Activated B cell treated with CpG ODN at 0.5 μM for 24 hours (primary cell): ENCODE measurements at regions of chr9 and their contacts with region 1.

Region 1: DNA sequence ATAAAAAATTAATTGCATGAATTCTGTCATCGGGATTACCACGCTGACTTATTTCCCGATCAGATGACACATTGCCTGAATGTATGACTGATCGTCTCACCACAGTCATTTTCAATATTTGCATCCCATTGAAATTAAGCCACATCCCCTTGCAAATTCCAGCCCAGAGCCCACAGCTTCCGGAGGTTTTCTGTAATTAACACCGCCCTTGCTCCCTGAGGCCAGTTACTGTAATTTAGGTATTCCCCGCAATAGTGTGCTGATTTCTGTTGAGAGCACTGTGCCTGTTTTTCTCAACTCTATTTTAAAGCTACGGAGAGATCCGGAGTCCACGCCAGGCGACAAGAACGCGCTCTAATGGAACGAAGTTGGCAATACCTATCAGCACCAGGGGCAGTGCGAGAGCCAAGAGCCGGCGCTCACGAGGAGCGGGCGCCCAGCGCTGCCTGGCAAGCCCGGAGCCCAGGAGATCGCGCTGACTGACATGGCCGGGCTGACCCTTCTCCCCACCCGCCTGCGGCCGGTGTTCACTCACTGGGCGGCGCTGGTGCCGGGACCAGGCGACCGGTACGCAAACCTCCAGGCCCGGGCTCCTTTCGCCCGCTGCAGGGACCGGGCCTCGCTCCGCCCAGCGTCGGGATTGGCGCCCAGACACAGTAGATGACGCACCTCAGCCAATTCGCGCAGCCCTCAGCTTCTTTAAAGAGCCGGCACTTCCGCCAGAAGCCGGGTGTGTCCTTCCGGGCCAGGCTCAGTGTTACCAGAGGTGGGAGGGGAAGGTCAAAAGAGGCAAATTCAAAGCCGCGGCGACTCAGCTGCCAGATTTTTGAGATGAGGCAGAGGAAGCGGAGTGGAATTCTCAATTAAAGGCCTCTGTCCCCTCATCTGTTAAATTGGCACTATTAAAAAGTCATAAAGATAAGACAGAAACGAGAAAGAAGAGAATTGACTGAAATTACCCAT is at the start of gene PLGRKT:
- DNase-seq: peak; percentile 82
- ATAC-seq: peak; percentile 78
- H3K4me3 Mint-ChIP-seq: peak within 1 kb of the TSS; percentile 96
- H3K27ac Mint-ChIP-seq: peak within 1 kb of the TSS; percentile 100
- H3K4me1 Mint-ChIP-seq: peaks cover 59% of the 10 kb centered on the region
- H3K27me3 Mint-ChIP-seq: no peaks in the 10 kb centered on the region
- CTCF ChIP-seq: no peak
- total RNA-seq, gene PLGRKT: 57.1 and 59.7 TPM in 2 replicates

Region 2: GRCh38 chr9:4679268-4680172 is 758.0 kb before region 1 on chr9 and contains the start of gene CDC37L1:
- CTCF ChIA-PET with region 1: no interaction called
- POLR2A ChIA-PET with region 1: interaction called, 4 read pairs
- intact Hi-C with region 1: loop called (anchors 1 kb)
- DNase-seq: peak; percentile 100
- ATAC-seq: peak; percentile 95
- H3K4me3 Mint-ChIP-seq: no peak within 1 kb of the TSS
- H3K27ac Mint-ChIP-seq: no peak within 1 kb of the TSS
- H3K4me1 Mint-ChIP-seq: peaks cover 7% of the 10 kb centered on the region
- H3K27me3 Mint-ChIP-seq: no peaks in the 10 kb centered on the region
- CTCF ChIP-seq: no peak
- total RNA-seq, gene CDC37L1: 12.3 and 14.7 TPM in 2 replicates

Region 3: DNA sequence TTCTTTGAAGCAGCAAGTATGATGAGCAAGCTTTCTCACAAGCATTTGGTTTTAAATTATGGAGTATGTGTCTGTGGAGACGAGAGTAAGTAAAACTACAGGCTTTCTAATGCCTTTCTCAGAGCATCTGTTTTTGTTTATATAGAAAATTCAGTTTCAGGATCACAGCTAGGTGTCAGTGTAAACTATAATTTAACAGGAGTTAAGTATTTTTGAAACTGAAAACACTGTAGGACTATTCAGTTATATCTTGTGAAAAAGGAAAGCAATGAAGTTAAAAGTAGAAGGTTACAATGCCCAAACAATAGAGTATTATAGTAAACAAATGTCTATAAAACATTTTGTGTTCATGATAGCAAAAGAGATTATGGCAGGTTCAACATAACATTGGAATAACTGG is 363.8 kb before region 1 on chr9:
- CTCF ChIA-PET with region 1: no interaction called
- POLR2A ChIA-PET with region 1: no interaction called
- intact Hi-C with region 1: loop called (anchors 10 kb)
- DNase-seq: no peak
- ATAC-seq: no peak
- H3K4me3 Mint-ChIP-seq: no peak overlapping the region
- H3K27ac Mint-ChIP-seq: no peak overlapping the region
- H3K4me1 Mint-ChIP-seq: no peaks in the 10 kb centered on the region
- H3K27me3 Mint-ChIP-seq: no peaks in the 10 kb centered on the region
- CTCF ChIP-seq: no peak

Region 4: GRCh38 chr9:5450359-5451091 is 13.0 kb after region 1 on chr9 and contains the start of gene CD274:
- CTCF ChIA-PET with region 1: interaction called, 22 read pairs
- POLR2A ChIA-PET with region 1: interaction called, 152 read pairs
- intact Hi-C with region 1: loop called (anchors 1 kb)
- DNase-seq: peak; percentile 76
- ATAC-seq: peak; percentile 83
- H3K4me3 Mint-ChIP-seq: peak within 1 kb of the TSS; percentile 95
- H3K27ac Mint-ChIP-seq: peak within 1 kb of the TSS; percentile 96
- H3K4me1 Mint-ChIP-seq: peaks cover 75% of the 10 kb centered on the region
- H3K27me3 Mint-ChIP-seq: no peaks in the 10 kb centered on the region
- CTCF ChIP-seq: no peak
- total RNA-seq, gene CD274: 47.4 and 48.9 TPM in 2 replicates

Region 5: GRCh38 chr9:5557606-5558587 is 120.4 kb after region 1 on chr9:
- CTCF ChIA-PET with region 1: no interaction called
- POLR2A ChIA-PET with region 1: interaction called, 22 read pairs
- intact Hi-C with region 1: no loop called
- DNase-seq: peak; percentile 20
- ATAC-seq: peak; percentile 83
- H3K4me3 Mint-ChIP-seq: peak overlapping the region; percentile 50
- H3K27ac Mint-ChIP-seq: peak overlapping the region; percentile 75
- H3K4me1 Mint-ChIP-seq: peaks cover 55% of the 10 kb centered on the region
- H3K27me3 Mint-ChIP-seq: no peaks in the 10 kb centered on the region
- CTCF ChIP-seq: no peak

Region 6: GRCh38 chr9:5832543-5833529 is 395.3 kb after region 1 on chr9 and contains the start of gene ERMP1:
- CTCF ChIA-PET with region 1: no interaction called
- POLR2A ChIA-PET with region 1: interaction called, 8 read pairs
- intact Hi-C with region 1: loop called (anchors 5 kb)
- DNase-seq: peak; percentile 88
- ATAC-seq: peak; percentile 88
- H3K4me3 Mint-ChIP-seq: peak within 1 kb of the TSS; percentile 90
- H3K27ac Mint-ChIP-seq: peak within 1 kb of the TSS; percentile 83
- H3K4me1 Mint-ChIP-seq: peaks cover 33% of the 10 kb centered on the region
- H3K27me3 Mint-ChIP-seq: no peaks in the 10 kb centered on the region
- CTCF ChIP-seq: peak; percentile 22
- total RNA-seq, gene ERMP1: 7.3 and 7.5 TPM in 2 replicates

Region 7: DNA sequence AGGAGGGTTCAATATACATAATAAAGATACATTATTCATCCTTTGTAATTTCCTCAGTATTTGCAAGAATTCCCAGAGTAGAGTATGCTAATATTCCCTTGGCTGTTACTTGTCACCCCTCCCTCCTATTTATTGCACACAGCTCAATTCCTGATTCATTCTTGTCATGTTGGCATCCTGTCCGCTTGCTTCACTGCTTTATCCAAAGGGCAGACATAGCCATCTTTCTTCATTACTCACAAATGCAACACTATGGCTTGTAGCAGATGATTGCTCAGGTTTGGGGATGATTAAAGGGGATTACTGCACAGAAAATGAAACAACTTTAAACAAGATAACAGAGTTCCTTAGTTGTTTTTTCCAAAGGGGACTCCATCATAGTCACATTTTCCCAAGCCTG is 776.9 kb after region 1 on chr9:
- CTCF ChIA-PET with region 1: no interaction called
- POLR2A ChIA-PET with region 1: no interaction called
- intact Hi-C with region 1: no loop called
- DNase-seq: no peak
- ATAC-seq: no peak
- H3K4me3 Mint-ChIP-seq: no peak overlapping the region
- H3K27ac Mint-ChIP-seq: no peak overlapping the region
- H3K4me1 Mint-ChIP-seq: no peaks in the 10 kb centered on the region
- H3K27me3 Mint-ChIP-seq: peaks cover 18% of the 10 kb centered on the region
- CTCF ChIP-seq: no peak